Lower leg skin (tissue), 4 donors: ENCODE measurements at regions of chr10 and their contacts with region 1.

Region 1: DNA sequence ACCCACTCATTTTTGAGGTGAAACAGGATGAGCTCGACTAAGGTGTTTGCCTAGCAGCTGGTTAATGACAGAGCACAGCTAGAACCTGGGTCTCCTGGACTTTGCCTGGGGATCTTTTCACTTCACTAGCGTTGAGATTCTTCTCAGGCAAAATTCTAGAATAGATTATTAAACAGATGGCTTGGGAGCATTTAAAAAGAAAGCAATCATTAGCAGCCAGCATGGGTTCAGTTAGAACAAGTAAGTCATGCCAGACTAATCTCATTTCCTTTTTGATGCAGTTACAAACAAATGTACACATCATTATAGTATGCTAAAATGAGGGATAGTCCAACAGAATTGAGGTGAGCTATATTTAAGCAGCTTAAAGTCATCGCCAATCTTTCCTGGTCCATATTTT is 291.3 kb upstream of the MYO3A start:
- DNase-seq: no peak
- H3K4me3 ChIP-seq: no peak overlapping the region
- CTCF ChIP-seq: no peak
- POLR2A ChIP-seq: no peak

Region 2: GRCh38 chr10:25604591-25604990 is 38.1 kb before region 1 on chr10:
- intact Hi-C with region 1: loop called (anchors 1 kb)
- DNase-seq: no peak
- H3K4me3 ChIP-seq: no peak overlapping the region
- CTCF ChIP-seq: no peak
- POLR2A ChIP-seq: no peak

Region 3: GRCh38 chr10:25778646-25779045 is 135.9 kb after region 1 on chr10:
- intact Hi-C with region 1: no loop called
- DNase-seq: no peak
- H3K4me3 ChIP-seq: no peak overlapping the region
- CTCF ChIP-seq: no peak
- POLR2A ChIP-seq: no peak